IMR-90 (cell line): ENCODE measurements at regions of chr3 and their contacts with region 1.

Region 1: GRCh38 chr3:160719710-160720109 is 36.3 kb upstream of the PPM1L start:
- DNase-seq: no peak
- ATAC-seq: no peak
- H3K4me3 ChIP-seq: no peak overlapping the region
- H3K27ac ChIP-seq: no peak overlapping the region
- H3K4me1 ChIP-seq: no peaks in the 10 kb centered on the region
- H3K27me3 ChIP-seq: no peaks in the 10 kb centered on the region
- CTCF ChIP-seq: no peak
- POLR2A ChIP-seq: no peak
- RAD21 ChIP-seq: no peak

Region 2: GRCh38 chr3:160540551-160540950 is 179.2 kb before region 1 on chr3:
- CTCF ChIA-PET with region 1: no interaction called
- POLR2A ChIA-PET with region 1: no interaction called
- dilution Hi-C with region 1: no loop called
- in situ Hi-C with region 1: no loop called
- intact Hi-C with region 1: no loop called
- DNase-seq: peak; percentile 50
- ATAC-seq: peak; percentile 62
- H3K4me3 ChIP-seq: no peak overlapping the region
- H3K27ac ChIP-seq: no peak overlapping the region
- H3K4me1 ChIP-seq: 0 out of 2 replicates have a peak, but pooled peaks cover 2% of the 10 kb centered on the region
- H3K27me3 ChIP-seq: no peaks in the 10 kb centered on the region
- CTCF ChIP-seq: no peak
- POLR2A ChIP-seq: no peak
- RAD21 ChIP-seq: no peak

Region 3: GRCh38 chr3:160931474-160931873 is 211.8 kb after region 1 on chr3:
- CTCF ChIA-PET with region 1: no interaction called
- POLR2A ChIA-PET with region 1: no interaction called
- dilution Hi-C with region 1: no loop called
- in situ Hi-C with region 1: loop called (anchors 10 kb)
- intact Hi-C with region 1: no loop called
- DNase-seq: no peak
- ATAC-seq: no peak
- H3K4me3 ChIP-seq: no peak overlapping the region
- H3K27ac ChIP-seq: no peak overlapping the region
- H3K4me1 ChIP-seq: no peaks in the 10 kb centered on the region
- H3K27me3 ChIP-seq: peaks cover 5% of the 10 kb centered on the region; the same call in 1 of the 2 replicates
- CTCF ChIP-seq: no peak
- POLR2A ChIP-seq: no peak
- RAD21 ChIP-seq: no peak